ENCODE measurements at regions of chr3 and their contacts with region 1.

Region 1: GRCh38 chr3:107271787-107272387 is 105.4 kb upstream of the CCDC54 start:
- DNase-seq: no peak
- H3K4me3 Mint-ChIP-seq: no peak overlapping the region
- H3K27ac Mint-ChIP-seq: no peak overlapping the region
- H3K4me1 Mint-ChIP-seq: no peaks in the 10 kb centered on the region
- H3K27me3 Mint-ChIP-seq: peaks cover 13% of the 10 kb centered on the region

Region 2: DNA sequence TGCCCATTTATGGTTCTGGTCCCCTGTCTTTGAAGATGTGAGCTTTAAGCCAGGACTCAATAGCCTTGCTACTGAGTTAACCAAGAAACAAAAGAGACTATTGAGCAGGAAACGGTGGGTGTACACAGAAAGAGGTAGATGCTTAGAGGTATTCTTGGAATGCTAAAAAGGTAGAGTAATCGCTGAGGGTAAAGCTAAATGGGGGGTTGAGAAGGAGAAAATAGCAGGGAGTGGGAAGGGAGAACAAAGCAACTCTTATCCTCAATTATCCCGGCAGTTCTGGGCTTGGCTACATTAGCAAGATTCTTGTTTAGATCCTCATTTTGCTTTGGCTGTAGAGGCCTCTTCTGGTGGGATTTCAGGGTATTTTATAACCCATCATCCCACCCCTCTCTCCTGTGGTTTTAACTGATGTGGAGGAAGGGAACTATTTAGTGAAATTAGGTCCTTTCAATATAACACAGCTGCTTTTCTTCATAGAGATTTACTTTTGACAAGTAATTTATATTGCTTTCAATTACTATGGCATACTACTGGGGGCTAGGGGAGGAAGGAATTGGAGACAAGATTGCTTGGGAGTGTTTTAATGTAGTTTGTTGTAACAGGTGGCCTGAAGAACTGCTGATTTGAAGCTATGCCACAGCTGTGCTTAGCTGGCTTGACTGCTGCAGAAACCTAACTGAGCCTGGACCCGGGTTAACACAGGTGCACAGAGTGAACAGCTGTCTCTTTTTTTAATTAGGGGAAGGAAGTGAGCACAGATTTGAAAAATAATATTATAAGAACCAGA is 128.9 kb before region 1 on chr3:
- CTCF ChIA-PET with region 1: no interaction called
- DNase-seq: no peak
- H3K4me3 Mint-ChIP-seq: no peak overlapping the region
- H3K27ac Mint-ChIP-seq: no peak overlapping the region
- H3K4me1 Mint-ChIP-seq: no peaks in the 10 kb centered on the region
- H3K27me3 Mint-ChIP-seq: no peaks in the 10 kb centered on the region

Region 3: GRCh38 chr3:107235928-107236315 is 36.0 kb before region 1 on chr3:
- CTCF ChIA-PET with region 1: interaction called, 13 read pairs
- DNase-seq: peak; percentile 54
- H3K4me3 Mint-ChIP-seq: peak overlapping the region; percentile 61
- H3K27ac Mint-ChIP-seq: no peak overlapping the region
- H3K4me1 Mint-ChIP-seq: peaks cover 22% of the 10 kb centered on the region
- H3K27me3 Mint-ChIP-seq: peaks cover 28% of the 10 kb centered on the region

Region 4: GRCh38 chr3:107416145-107416544 is 144.3 kb after region 1 on chr3:
- CTCF ChIA-PET with region 1: interaction called, 72 read pairs
- DNase-seq: no peak
- H3K4me3 Mint-ChIP-seq: no peak overlapping the region
- H3K27ac Mint-ChIP-seq: no peak overlapping the region
- H3K4me1 Mint-ChIP-seq: peaks cover 27% of the 10 kb centered on the region
- H3K27me3 Mint-ChIP-seq: peaks cover 12% of the 10 kb centered on the region

Region 5: DNA sequence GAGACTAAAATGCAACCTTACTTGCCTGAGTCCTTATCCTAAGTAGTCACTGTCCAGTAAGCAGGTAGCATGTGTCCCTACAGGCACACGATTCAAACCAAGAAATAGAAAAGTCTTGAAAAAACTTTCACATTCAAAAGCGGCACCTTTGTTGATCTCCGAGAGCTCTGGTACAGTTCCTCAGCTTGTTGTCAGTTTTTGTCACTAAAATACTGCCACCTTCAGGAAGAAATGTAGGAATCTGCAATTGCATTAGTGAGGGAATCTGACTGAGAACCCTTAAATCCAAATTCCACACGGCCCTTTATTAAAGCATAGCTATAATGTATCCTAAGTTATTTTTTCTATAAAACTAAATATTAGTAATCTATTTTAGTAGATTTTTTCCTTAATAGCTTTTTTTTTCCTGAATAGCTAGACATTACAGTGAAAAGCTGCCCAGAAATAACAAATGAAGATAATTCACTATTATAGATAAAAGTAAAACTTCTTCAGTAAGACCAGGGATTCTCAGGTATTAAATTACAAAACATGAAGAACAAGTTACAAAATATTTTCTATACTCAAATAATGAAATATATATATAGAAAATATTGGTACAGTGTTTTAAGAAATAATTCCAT is 149.4 kb after region 1 on chr3:
- CTCF ChIA-PET with region 1: interaction called, 72 read pairs
- DNase-seq: peak; percentile 29
- H3K4me3 Mint-ChIP-seq: no peak overlapping the region
- H3K27ac Mint-ChIP-seq: no peak overlapping the region
- H3K4me1 Mint-ChIP-seq: peaks cover 2% of the 10 kb centered on the region
- H3K27me3 Mint-ChIP-seq: peaks cover 16% of the 10 kb centered on the region

Region 6: GRCh38 chr3:107429320-107430181 is 157.7 kb after region 1 on chr3:
- CTCF ChIA-PET with region 1: interaction called, 49 read pairs
- DNase-seq: peak; percentile 62
- H3K4me3 Mint-ChIP-seq: peak overlapping the region; percentile 73
- H3K27ac Mint-ChIP-seq: peak overlapping the region; percentile 16
- H3K4me1 Mint-ChIP-seq: peaks cover 19% of the 10 kb centered on the region
- H3K27me3 Mint-ChIP-seq: peaks cover 54% of the 10 kb centered on the region

Region 7: GRCh38 chr3:107476462-107476861 is 204.6 kb after region 1 on chr3:
- CTCF ChIA-PET with region 1: no interaction called
- DNase-seq: no peak
- H3K4me3 Mint-ChIP-seq: no peak overlapping the region
- H3K27ac Mint-ChIP-seq: no peak overlapping the region
- H3K4me1 Mint-ChIP-seq: no peaks in the 10 kb centered on the region
- H3K27me3 Mint-ChIP-seq: no peaks in the 10 kb centered on the region

Measured in activated naive CD4-positive, alpha-beta T cell treated with anti-CD3 and anti-CD28 coated beads, Interleukin-2, amount 10 ng/mL, durations not matched to agents 7 days and 5 days (primary cell).